CD8-positive, alpha-beta T cell (primary cell): ENCODE measurements at regions of chr3 and their contacts with region 1.

Region 1: DNA sequence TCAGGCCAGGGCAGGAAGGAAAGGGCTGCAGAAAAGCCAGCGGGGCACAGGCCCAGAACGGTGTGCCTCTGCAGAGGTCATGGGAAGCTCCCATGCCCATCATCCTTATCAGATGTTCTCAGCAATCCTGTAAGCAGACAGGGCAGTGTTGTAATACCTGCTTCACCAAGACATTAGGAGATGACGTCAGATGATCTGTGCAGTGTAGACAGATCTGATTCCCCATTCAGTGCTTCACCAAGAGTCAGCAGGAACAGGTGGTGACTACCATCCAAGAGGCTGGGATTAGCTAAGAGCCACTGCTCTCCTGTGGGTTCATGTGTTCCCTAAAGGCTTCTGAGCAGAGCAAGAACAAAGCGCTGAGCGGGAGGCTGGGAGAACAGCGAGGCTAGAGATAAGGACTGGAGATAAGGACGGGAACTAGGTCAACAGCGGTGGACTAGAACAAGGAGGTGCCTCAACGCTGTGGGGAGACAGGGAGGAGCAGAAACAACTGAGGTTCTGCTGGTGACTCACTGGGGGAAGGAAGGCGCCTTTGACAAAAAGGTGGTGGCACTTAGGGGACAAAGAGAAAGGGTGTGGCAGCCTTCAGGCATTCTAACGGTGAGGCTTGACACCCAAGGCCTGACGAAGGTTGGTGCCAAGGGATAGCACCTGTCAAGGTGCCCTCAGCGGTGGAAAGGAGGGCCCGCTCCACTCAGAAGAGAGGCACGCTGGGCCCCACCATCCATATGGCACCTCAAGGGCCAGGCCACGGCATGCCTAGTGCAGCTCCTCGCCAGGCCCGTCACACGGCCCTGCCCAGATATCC is 28.4 kb downstream of the CCDC12 start:
- DNase-seq: peak; percentile 53 to 91 (median 79)
- ATAC-seq: peak; percentile 76
- H3K4me3 ChIP-seq: no peak overlapping the region
- H3K4me3 Mint-ChIP-seq: peak overlapping the region; percentile 33
- H3K27ac ChIP-seq: peak overlapping the region; percentile 39 to 77
- H3K27ac Mint-ChIP-seq: peak overlapping the region; percentile 97
- H3K4me1 ChIP-seq: peaks cover 78% of the 10 kb centered on the region
- H3K4me1 Mint-ChIP-seq: peaks cover 83% of the 10 kb centered on the region
- H3K27me3 ChIP-seq: no peaks in the 10 kb centered on the region
- H3K27me3 Mint-ChIP-seq: no peaks in the 10 kb centered on the region
- CTCF ChIP-seq: no peak

Region 2: GRCh38 chr3:46929324-46929723 is 18.9 kb before region 1 on chr3:
- CTCF ChIA-PET with region 1: interaction called, 3 read pairs
- POLR2A ChIA-PET with region 1: interaction called, 4 read pairs
- intact Hi-C with region 1: loop called in 1 of 2 experiments (anchors 2 kb)
- DNase-seq: no peak
- ATAC-seq: no peak
- H3K4me3 ChIP-seq: no peak overlapping the region
- H3K4me3 Mint-ChIP-seq: no peak overlapping the region
- H3K27ac ChIP-seq: peak overlapping the region in 1 of 2 experiments; percentile 33
- H3K27ac Mint-ChIP-seq: peak overlapping the region; percentile 86
- H3K4me1 ChIP-seq: peaks cover 64% of the 10 kb centered on the region
- H3K4me1 Mint-ChIP-seq: peaks cover 65% of the 10 kb centered on the region
- H3K27me3 ChIP-seq: no peaks in the 10 kb centered on the region
- H3K27me3 Mint-ChIP-seq: no peaks in the 10 kb centered on the region
- CTCF ChIP-seq: no peak

Region 3: DNA sequence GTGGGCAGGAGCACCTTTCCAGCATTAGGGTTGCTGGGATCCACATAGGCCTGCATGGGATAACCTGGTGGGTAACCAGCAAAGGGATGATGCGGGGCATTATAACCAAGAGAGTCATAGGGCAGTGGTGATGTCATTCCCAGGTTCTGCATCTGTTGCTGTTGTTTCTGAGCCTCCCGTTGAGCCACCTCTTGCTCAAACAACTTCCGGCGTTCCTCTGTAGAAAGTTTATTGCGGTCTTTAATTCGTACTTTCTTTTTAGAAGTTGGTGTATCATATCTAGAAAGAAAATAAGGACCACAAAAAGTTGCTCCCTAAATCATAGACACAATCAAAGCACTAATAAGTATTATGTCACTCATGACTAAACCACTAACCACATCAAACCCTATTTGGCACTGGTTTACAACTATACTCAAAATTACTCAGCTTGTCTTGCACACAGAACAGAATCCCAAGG is 109.1 kb after region 1 on chr3:
- CTCF ChIA-PET with region 1: no interaction called
- POLR2A ChIA-PET with region 1: no interaction called
- intact Hi-C with region 1: loop called in 1 of 2 experiments (anchors 10 kb)
- DNase-seq: peak in 8 of 9 experiments; percentile 7 to 88 (median 56)
- ATAC-seq: peak; percentile 88
- H3K4me3 ChIP-seq: no peak overlapping the region
- H3K4me3 Mint-ChIP-seq: peak overlapping the region; percentile 7
- H3K27ac ChIP-seq: peak overlapping the region; percentile 7 to 55
- H3K27ac Mint-ChIP-seq: peak overlapping the region; percentile 92
- H3K4me1 ChIP-seq: peaks cover 15% of the 10 kb centered on the region
- H3K4me1 Mint-ChIP-seq: peaks cover 39% of the 10 kb centered on the region
- H3K27me3 ChIP-seq: no peaks in the 10 kb centered on the region
- H3K27me3 Mint-ChIP-seq: no peaks in the 10 kb centered on the region
- CTCF ChIP-seq: no peak